Colonic mucosa (tissue), 4 donors: ENCODE measurements at regions of chr21 and their contacts with region 1.

Region 1: DNA sequence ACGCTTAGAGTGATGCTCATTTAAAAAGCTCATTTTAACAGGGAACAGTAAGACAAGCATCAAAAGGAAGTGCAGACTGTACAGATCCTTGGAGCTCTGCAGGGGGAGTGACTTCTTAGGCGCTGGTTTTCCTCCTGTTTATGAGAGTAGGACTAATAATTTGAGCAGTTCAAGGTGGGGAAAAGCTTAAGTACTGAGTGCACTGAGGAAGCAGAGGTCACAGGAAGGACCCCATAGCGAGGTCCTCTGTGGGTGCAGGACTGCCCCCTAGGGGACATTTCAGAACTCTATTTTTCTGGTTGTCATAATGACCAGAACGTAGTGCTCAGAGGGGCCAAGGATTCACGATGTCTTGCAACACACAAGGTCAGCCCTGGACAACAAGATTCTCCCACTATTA is 112.1 kb downstream of the HLCS start:
- DNase-seq: peak; percentile 53
- H3K4me3 ChIP-seq: no peak overlapping the region
- H3K27ac ChIP-seq: no peak overlapping the region
- H3K4me1 ChIP-seq: no peaks in the 10 kb centered on the region
- H3K27me3 ChIP-seq: no peaks in the 10 kb centered on the region
- CTCF ChIP-seq: peak; percentile 52

Region 2: DNA sequence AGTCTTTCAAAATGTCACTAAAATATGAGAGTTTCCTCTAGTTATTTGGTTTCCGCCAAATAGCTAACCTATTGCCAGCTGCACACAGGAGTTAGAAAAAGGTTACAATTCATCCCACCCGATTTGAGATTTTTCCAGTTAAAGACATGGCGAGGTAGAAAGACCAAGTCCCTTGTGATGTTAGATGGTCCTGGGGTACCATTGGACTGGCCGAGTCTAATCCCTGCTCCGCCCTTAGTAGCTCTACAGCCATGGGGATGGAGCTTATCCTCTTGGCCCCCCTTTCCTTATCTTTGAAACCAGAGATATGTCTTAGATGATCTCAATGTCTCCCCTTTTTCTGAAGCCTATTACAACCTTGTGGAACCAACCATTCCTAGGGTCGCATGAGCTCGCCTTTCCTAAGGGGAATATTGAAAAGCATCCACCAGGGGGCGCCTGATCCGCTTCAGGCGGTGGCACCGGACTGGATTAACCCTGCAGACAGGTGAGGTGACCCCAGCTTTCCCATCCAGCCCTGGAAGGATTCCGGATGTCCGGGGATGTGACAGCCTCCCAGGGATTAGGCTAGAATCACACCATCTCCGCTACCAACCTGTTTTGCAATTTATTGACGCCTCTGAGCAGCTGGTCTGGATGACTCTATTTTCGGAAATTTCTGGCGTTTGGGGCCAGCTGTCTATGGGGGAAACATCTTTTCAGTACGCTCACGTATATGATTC is 223.7 kb before region 1 on chr21:
- intact Hi-C with region 1: loop called (anchors 10 kb)
- DNase-seq: peak; percentile 73
- H3K4me3 ChIP-seq: no peak overlapping the region
- H3K27ac ChIP-seq: no peak overlapping the region
- H3K4me1 ChIP-seq: no peaks in the 10 kb centered on the region
- H3K27me3 ChIP-seq: peaks cover 21% of the 10 kb centered on the region
- CTCF ChIP-seq: peak; percentile 73

Region 3: DNA sequence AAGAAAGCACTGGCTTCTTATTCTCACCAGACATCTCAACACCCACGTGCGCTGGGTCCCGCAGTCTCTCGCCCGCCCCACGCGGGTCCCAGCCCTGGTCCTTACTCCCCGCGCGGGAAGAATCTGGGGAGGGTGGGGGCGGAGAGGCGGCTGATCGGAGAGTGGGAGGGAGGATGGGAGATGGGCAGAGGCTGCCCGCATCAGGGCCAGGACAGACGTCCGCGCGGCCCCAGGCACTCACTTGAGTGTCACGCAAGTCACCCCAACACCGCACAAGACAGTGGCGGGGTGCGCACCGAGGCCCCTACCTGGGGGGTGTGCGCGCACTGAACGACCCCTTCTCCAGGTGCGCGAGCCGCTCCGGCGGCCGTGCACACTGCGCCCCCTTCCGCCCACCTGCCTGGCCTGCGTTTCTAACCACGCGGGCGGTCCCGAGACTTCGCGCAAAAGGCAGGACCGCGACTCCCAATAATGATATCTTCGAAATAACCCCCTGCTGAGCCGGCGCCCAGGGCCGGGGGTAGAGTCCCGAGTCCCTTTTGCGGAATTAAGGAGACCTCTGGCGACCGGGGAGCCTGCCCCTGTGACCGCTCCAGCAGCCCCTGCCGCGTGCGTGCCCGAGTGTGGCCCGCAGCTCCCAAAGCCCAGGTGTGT is 161.4 kb before region 1 on chr21:
- intact Hi-C with region 1: no loop called
- DNase-seq: no peak
- H3K4me3 ChIP-seq: no peak overlapping the region
- H3K27ac ChIP-seq: no peak overlapping the region
- H3K4me1 ChIP-seq: no peaks in the 10 kb centered on the region
- H3K27me3 ChIP-seq: peaks cover 78% of the 10 kb centered on the region
- CTCF ChIP-seq: no peak

Region 4: GRCh38 chr21:36902796-36903195 is 48.4 kb after region 1 on chr21:
- intact Hi-C with region 1: no loop called
- DNase-seq: no peak
- H3K4me3 ChIP-seq: no peak overlapping the region
- H3K27ac ChIP-seq: no peak overlapping the region
- H3K4me1 ChIP-seq: no peaks in the 10 kb centered on the region
- H3K27me3 ChIP-seq: no peaks in the 10 kb centered on the region
- CTCF ChIP-seq: no peak

Region 5: GRCh38 chr21:36927719-36928117 is 73.3 kb after region 1 on chr21:
- intact Hi-C with region 1: no loop called
- DNase-seq: peak; percentile 87
- H3K4me3 ChIP-seq: no peak overlapping the region
- H3K27ac ChIP-seq: no peak overlapping the region
- H3K4me1 ChIP-seq: no peaks in the 10 kb centered on the region
- H3K27me3 ChIP-seq: no peaks in the 10 kb centered on the region
- CTCF ChIP-seq: peak; percentile 85

Region 6: DNA sequence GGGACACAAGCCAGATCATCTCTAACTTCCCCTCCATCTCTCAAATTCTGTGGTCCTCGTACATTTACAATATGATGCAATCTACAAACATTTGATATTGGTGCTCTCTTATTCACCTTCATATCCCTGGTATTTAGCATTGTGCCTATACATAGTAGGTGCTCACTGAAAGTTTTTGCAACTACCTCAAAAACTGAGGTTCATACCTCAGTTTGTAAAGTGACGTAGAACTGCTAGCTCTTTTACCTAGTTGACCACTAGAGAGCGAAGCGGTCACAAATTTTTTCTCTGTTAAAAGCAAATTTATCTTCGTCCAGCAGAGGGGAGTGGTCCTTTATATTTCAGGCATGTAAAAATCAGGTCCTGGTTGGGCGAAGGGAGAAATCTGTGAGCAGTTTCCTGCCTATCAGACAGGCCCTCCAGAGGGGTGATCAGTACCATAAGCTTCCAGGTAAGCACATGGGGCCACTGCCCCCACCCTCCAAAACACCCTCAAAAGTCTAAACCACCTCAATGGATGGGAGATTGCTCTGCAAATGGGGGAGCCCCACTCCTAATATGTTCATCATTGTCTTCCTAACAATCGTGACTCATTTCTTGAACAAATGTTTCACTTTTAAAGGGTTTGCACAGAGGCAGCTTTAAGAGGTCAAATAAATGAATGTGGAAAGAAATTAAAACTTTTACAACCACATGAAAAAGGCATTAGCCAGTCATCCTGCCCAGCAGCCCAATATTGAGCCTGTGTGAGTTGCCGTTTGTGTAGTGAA is 122.7 kb after region 1 on chr21:
- intact Hi-C with region 1: no loop called
- DNase-seq: no peak
- H3K4me3 ChIP-seq: no peak overlapping the region
- H3K27ac ChIP-seq: no peak overlapping the region
- H3K4me1 ChIP-seq: no peaks in the 10 kb centered on the region
- H3K27me3 ChIP-seq: no peaks in the 10 kb centered on the region
- CTCF ChIP-seq: peak; percentile 44